ENCODE measurements at regions of chr3 and their contacts with region 1.

Region 1: GRCh38 chr3:48811524-48811923 is 36.1 kb downstream of the PRKAR2A start:
- DNase-seq: no peak
- ATAC-seq: no peak
- H3K4me3 ChIP-seq: no peak overlapping the region
- H3K4me3 Mint-ChIP-seq: peak overlapping the region in 5 of 10 donors; percentile 16 to 51 (median 33)
- H3K27ac ChIP-seq: peak overlapping the region; percentile 64
- H3K27ac Mint-ChIP-seq: peak overlapping the region; percentile 64 to 97 (median 89)
- H3K4me1 ChIP-seq: peaks cover 16 to 18% of the 10 kb centered on the region in 2 donors
- H3K4me1 Mint-ChIP-seq: peaks cover 22 to 47% (median 40%) of the 10 kb centered on the region in 7 donors
- H3K27me3 ChIP-seq: no peaks in the 10 kb centered on the region
- H3K27me3 Mint-ChIP-seq: no peaks in the 10 kb centered on the region

Region 2: DNA sequence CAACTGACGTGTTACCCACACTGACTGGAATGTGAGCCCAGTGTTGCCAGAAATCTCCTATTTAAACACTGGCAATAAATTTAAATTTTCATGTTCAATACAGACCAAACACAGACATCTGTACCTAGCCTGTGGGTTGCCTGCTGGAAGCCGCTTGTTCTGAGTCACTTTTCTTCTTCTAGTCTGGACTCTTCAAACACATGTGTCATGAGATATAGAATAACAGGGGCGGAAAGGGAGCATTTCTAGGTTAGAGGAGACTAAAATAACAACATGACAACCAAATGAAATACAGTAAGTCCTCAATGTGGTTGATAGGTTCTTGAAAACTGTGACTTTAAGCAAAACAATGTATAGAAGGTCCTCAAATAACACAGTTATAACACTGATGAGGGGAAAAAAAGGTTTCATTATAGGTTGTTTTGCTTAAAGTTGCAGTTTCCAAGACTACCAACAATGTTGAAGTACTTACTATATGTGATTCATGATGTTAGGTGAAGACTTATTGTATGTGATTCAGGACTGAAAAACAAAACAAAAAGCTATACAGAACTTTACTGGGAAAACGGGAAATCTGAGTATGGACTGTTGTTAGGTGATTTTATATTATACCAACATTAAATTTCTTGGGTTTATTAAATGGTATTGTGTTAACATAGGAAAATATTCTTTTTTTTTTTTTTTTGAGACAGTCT is 27.0 kb before region 1 on chr3:
- CTCF ChIA-PET with region 1: interaction called, 8 read pairs
- POLR2A ChIA-PET with region 1: no interaction called
- intact Hi-C with region 1: loop called in 1 of 2 experiments (anchors 1 kb)
- DNase-seq: no peak
- ATAC-seq: no peak
- H3K4me3 ChIP-seq: no peak overlapping the region
- H3K4me3 Mint-ChIP-seq: no peak overlapping the region
- H3K27ac ChIP-seq: no peak overlapping the region
- H3K27ac Mint-ChIP-seq: peak overlapping the region in 2 of 9 donors; percentile 12 to 16
- H3K4me1 ChIP-seq: peaks cover 6 to 12% of the 10 kb centered on the region in 2 donors
- H3K4me1 Mint-ChIP-seq: peaks cover 9 to 16% (median 15%) of the 10 kb centered on the region in 7 donors
- H3K27me3 ChIP-seq: no peaks in the 10 kb centered on the region
- H3K27me3 Mint-ChIP-seq: no peaks in the 10 kb centered on the region

Measured in naive thymus-derived CD4-positive, alpha-beta T cell (primary cell).